Tibial artery (tissue), 4 donors: ENCODE measurements at regions of chr16 and their contacts with region 1.

Region 1: DNA sequence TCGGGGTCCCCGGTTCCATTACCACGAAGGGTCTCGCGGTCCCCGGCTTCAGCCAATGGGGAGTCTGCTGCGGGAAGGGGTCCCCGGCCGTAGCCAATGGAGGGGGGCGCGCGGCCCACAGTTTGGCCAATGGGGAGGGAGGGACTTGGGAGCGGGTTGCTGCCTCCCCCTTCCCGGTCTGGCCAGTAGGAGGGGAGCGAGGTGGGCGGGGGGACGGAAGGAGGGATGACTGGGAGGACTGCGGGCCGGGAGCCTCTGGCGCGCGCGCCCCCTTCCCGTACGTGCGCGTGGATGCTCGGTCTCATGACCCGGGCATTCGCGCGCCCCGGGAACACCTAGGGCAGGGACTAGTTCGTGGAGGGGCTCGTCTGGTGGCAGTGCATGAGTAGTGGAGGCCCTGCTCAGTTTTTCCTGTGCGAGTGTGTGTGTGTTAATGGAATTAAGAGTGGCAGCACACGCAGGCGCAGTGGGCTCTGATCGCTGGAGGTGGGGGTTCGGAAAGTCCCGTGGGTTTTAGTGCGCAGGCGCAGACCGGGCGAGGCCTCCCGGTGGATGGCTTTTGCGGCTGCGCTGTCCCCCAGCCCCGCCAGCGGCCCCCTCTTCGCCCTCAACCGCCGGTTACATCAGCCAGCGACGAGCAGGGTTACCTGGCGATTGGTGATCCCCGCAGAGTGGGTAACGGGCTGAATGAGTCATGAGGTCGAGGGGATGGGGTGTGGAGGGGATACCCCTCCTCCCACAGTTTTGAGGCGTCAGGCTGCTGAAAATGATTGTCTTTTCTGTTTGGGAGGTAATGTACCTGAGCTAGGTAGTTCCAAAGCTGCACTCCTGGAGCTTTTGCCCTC is 1.3 kb downstream of the ATXN2L start:
- DNase-seq: peak; percentile 97 to 99
- H3K4me3 ChIP-seq: peak overlapping the region; percentile 89 to 99
- H3K27ac ChIP-seq: peak overlapping the region; percentile 99 to 100
- H3K4me1 ChIP-seq: peaks cover 0 to 32% (median 23%) of the 10 kb centered on the region in 4 donors
- H3K27me3 ChIP-seq: no peaks in the 10 kb centered on the region
- CTCF ChIP-seq: peak; percentile 38 to 41

Region 2: GRCh38 chr16:28597692-28598261 is 226.3 kb before region 1 on chr16:
- intact Hi-C with region 1: no loop called
- DNase-seq: no peak
- H3K4me3 ChIP-seq: no peak overlapping the region
- H3K27ac ChIP-seq: no peak overlapping the region
- H3K4me1 ChIP-seq: no peaks in the 10 kb centered on the region
- H3K27me3 ChIP-seq: peaks cover 0 to 25% of the 10 kb centered on the region in 2 donors
- CTCF ChIP-seq: no peak

Region 3: DNA sequence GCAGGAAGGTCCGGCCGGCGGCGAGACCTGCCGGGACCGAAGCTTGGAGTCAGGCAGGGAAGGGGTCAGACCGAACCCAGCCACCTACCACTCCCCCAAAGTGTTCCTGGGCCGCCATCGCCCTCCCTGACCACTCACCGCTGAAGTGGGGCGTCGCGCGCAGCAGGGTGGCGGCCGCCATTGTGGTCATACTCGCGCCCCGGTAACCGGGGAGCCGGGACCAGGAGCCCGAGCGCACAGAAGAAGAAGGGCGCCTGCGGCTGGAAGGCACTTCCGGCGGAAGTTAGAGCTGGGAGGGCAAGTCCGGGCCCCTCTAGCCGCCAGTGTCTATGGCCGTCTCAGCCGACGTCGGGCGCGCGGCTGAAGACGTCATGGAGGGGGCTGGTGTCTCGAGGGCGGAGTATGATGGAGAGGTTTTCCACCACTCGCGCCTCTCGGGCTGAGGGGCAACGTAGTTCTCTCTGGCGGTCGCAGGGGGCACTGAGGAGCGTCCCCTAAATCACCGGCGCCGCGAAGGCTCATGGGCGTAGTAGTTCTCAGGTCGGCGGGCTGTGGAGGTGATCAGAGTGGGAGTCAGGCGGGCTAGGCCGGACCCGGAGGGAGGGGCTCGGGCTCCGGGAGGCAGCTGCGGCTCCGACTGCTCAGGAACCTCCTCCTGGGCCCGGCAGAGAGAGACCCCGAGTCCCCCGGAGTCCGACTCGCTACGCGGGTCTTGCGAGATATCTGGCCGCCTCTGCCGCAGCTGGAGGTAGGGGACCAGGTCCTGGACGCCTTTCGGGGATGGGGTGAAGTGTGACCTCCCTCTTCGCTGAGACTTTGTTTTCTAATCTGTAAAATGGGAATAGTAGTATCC is 22.2 kb after region 1 on chr16 and contains the start of gene TUFM:
- intact Hi-C with region 1: loop called (anchors 2 kb)
- DNase-seq: peak; percentile 98 to 99
- H3K4me3 ChIP-seq: peak within 1 kb of the TSS; percentile 69 to 78
- H3K27ac ChIP-seq: peak within 1 kb of the TSS; percentile 88 to 95
- H3K4me1 ChIP-seq: peaks cover 0 to 28% (median 19%) of the 10 kb centered on the region in 4 donors
- H3K27me3 ChIP-seq: no peaks in the 10 kb centered on the region
- CTCF ChIP-seq: peak; percentile 69 to 79

Region 4: DNA sequence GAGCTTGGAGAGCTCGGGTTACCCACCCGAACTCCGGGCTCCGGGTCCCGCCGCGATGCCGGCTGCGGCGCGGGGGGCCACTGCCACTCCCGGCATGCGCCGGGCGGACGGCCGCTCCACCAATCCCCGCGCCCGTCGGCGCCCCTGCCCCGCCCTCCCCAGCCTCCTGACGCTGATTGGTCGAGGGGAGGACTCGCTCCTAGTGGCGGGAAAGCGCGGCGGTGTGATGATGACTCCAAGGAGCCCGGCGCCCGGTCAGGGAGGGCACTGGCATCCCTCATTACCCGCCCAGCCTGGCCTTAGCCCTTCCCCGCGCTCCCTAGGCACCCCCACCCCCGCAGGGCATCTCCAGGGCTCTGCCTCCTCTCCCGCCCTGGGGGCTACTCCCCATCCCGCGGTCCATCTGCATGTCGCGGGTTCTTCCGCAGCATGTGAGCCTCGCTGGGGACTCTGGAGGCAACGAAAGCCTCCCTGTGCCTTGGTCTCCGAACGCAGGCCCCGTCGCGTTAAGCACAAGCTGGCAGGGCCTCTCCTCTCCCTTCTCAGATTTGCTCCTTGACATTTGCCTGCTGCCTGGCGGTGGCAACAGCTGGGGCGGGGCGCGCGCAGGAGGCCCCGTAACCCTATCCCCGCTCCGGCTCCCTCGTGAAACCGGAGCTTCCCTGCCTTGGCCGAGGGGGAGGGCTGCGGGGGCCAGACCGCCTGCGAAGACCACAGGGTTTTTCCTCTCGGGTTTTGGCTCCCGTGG is 55.9 kb after region 1 on chr16:
- intact Hi-C with region 1: no loop called
- DNase-seq: peak; percentile 84 to 90
- H3K4me3 ChIP-seq: peak overlapping the region; percentile 52 to 55
- H3K27ac ChIP-seq: no peak overlapping the region
- H3K4me1 ChIP-seq: peaks cover 0 to 18% (median 12%) of the 10 kb centered on the region in 4 donors
- H3K27me3 ChIP-seq: peaks cover 0 to 18% of the 10 kb centered on the region in 2 donors
- CTCF ChIP-seq: peak; percentile 43 to 45

Region 5: DNA sequence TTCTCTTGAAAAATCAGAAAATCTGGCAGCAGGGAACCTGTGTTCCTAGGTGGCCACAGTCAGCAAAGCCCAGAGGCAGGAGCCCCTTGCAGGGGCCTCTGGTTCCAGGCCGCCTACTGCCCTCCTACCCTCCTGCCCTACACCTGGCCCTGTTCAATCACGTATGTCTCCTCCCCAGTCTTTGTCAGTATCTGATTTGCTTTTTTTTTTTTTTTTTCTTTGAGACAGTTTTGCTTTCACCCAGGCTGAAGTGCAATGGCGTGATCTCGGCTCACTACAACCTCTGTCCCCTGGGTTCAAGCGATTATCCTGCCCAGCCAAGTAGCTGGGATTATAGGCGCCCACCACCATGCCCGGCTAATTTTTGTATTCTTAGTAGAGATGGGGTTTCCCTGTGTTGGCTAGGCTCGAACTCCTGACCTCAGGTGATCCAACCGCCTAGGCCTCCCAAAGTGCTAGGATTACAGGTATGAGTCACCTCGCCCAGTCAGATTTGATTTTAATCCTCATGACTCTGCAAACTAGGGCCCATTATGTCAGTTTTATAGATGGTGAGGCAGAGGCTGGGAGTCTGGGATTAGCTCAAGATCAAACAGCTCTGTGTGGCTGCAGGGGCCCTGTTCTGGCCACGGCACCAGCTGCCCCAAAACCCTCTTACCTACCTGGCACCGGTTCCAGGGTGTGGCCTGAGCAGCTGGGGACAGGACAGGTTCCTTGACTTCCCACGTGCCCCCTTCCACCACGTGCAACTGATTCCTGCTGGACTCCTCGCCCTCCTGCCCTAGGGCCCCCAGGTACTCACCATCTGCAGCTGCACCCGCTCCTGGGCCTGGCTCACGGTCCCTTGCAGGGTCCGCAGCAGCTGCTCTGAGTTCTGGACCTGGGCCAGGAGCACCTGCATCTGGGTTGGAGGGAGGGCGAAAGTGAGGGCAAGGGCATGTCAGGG is 86.3 kb after region 1 on chr16:
- intact Hi-C with region 1: no loop called
- DNase-seq: no peak
- H3K4me3 ChIP-seq: no peak overlapping the region
- H3K27ac ChIP-seq: no peak overlapping the region
- H3K4me1 ChIP-seq: no peaks in the 10 kb centered on the region
- H3K27me3 ChIP-seq: no peaks in the 10 kb centered on the region
- CTCF ChIP-seq: no peak